ENCODE measurements at regions of chr9 and their contacts with region 1.

Region 1: DNA sequence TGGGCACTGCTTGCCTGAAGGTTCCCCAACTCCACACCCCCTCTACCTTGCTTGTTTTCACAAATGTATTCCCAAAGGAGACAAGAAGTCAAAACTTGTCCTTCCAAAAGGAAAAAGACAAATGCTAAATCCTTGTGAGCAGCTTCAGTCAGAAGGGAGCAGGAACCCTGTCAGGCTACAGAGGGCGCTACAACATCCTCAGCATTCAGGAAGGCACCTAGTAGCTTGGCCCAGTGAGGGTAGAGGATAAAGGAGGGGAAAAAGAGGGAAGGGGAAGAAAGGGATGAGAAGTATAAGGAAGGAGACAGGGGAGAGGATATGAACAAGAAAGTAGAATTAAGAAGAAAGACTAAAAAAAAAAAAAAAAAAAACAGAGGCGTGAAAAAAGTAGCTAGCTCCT is 97.5 kb downstream of the MLLT3 start:
- H3K4me3 ChIP-seq: no peak overlapping the region
- H3K27ac ChIP-seq: no peak overlapping the region
- H3K4me1 ChIP-seq: peaks cover 3% of the 10 kb centered on the region; the same call in 1 of the 2 replicates
- CTCF ChIP-seq: no peak

Region 2: DNA sequence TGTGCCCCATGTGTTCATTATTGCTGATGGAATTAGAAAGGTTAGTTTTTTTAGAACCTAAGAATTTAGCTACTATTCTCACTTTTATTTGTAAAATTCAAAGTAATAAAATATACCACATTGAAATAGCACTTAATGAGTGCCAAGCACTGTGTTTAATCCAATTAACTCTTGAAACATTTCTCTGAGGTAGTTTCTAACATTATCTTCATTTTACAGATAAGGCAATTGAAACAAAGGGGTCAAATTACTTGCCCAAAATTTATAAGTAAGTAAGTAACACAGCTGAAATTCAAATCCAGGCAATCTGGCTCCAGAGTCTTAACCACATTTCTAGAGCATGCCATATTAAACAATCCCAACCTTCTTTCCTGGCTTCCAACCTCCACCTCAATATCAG is 13.3 kb after region 1 on chr9:
- CTCF ChIA-PET with region 1: interaction called, 24 read pairs
- POLR2A ChIA-PET with region 1: interaction called, 3 read pairs
- H3K4me3 ChIP-seq: no peak overlapping the region
- H3K27ac ChIP-seq: 0 out of 2 replicates have a peak overlapping the region, but pooled peaks have one; percentile 14
- H3K4me1 ChIP-seq: peaks cover 23% of the 10 kb centered on the region
- CTCF ChIP-seq: no peak